Activated T-helper 1 cell treated with anti-CD3 and anti-CD28 coated beads, Interleukin-12 subunit alpha, Interleukin-12 subunit beta, Interleukin-2, Interleukin-4 antibody, amounts not matched to agents 30 ng/mL and 10 ng/mL and 1 ng/mL, durations not matched to agents 14 hours and 24 hours and 36 hours (primary cell): ENCODE measurements at regions of chr11 and their contacts with region 1.

Region 1: GRCh38 chr11:57567515-57568329 is at the start of gene UBE2L6:
- DNase-seq: peak; percentile 53
- H3K4me3 Mint-ChIP-seq: peak within 1 kb of the TSS; percentile 99
- H3K27ac Mint-ChIP-seq: peak within 1 kb of the TSS; percentile 97
- H3K4me1 Mint-ChIP-seq: peaks cover 41% of the 10 kb centered on the region
- H3K27me3 Mint-ChIP-seq: no peaks in the 10 kb centered on the region
- total RNA-seq, gene UBE2L6: 155 and 163 TPM in 2 replicates

Region 2: GRCh38 chr11:57426929-57427726 is 140.6 kb before region 1 on chr11 and contains the start of gene SLC43A3:
- intact Hi-C with region 1: loop called (anchors 1 kb)
- DNase-seq: peak; percentile 60
- H3K4me3 Mint-ChIP-seq: peak within 1 kb of the TSS; percentile 90
- H3K27ac Mint-ChIP-seq: peak within 1 kb of the TSS; percentile 80
- H3K4me1 Mint-ChIP-seq: peaks cover 56% of the 10 kb centered on the region
- H3K27me3 Mint-ChIP-seq: peaks cover 3% of the 10 kb centered on the region
- total RNA-seq, gene SLC43A3: 181 and 184 TPM in 2 replicates

Region 3: DNA sequence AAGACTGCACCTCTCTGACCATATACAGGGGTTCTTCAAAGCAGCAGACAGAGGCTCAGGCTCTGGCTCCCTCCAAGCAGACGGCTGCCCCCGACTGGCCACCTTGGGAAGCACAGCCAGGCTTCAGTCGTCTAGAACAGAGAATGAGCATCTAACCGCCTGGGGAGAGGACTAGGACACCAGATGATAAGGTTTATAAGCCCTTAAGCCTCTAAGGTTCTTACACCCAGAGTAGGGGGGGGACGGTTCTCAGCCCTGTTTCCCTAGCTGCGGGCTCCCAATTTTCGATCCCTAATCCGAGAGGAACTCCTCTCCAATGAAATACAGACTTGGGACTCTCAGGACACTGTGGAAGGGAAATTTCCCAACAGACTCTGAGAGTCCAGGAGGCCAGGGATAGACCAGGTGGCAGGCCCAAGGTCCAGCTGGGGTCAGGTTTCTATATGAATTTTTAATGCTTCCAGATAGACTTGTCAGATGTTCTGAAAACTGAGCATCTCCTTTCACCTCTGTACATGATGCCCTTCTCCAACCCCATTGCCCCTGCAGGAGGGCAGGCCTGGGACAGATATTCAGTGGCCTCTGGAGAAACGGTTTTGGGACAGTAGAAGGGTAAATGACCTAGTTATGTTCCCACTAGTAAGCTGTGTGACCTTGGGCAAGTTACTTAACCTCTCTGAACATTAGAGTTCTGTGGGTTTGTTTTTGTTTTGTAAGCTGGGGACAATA is 87.1 kb before region 1 on chr11:
- intact Hi-C with region 1: loop called (anchors 5 kb)
- DNase-seq: peak; percentile 62
- H3K4me3 Mint-ChIP-seq: no peak overlapping the region
- H3K27ac Mint-ChIP-seq: no peak overlapping the region
- H3K4me1 Mint-ChIP-seq: peaks cover 12% of the 10 kb centered on the region
- H3K27me3 Mint-ChIP-seq: peaks cover 49% of the 10 kb centered on the region

Region 4: GRCh38 chr11:57657194-57658022 is 89.7 kb after region 1 on chr11 and contains the start of gene CLP1:
- intact Hi-C with region 1: loop called (anchors 1 kb)
- DNase-seq: peak; percentile 99
- H3K4me3 Mint-ChIP-seq: peak within 1 kb of the TSS; percentile 96
- H3K27ac Mint-ChIP-seq: peak within 1 kb of the TSS; percentile 95
- H3K4me1 Mint-ChIP-seq: peaks cover 18% of the 10 kb centered on the region
- H3K27me3 Mint-ChIP-seq: no peaks in the 10 kb centered on the region
- total RNA-seq, gene CLP1: 17.8 and 19.1 TPM in 2 replicates

Region 5: DNA sequence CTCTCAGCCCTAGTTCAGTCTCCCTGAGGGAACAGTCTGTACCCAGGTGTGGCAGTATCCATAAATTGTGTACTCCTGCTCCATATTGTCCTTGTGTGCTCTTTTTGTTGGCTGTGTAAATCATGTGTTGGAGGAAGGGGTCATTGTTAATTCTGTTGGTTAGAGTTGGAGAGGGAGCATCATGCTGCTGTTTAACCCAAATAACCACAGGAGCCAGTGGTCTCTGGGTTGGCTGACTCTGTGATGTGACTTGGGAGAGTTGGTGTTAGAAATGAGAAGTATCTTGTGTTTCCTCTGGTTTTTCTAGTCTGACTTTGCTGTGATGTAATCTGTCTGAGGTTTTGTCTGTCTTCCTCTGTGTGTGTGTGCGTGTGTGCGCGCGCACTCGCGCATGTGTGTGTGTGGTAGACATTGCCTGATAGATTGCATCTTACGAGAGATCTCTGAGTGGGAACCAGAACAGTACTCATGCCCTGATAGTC is 224.4 kb after region 1 on chr11:
- intact Hi-C with region 1: loop called (anchors 2 kb)
- DNase-seq: peak; percentile 84
- H3K4me3 Mint-ChIP-seq: peak overlapping the region; percentile 53
- H3K27ac Mint-ChIP-seq: peak overlapping the region; percentile 86
- H3K4me1 Mint-ChIP-seq: peaks cover 50% of the 10 kb centered on the region
- H3K27me3 Mint-ChIP-seq: peaks cover 1% of the 10 kb centered on the region

Region 6: DNA sequence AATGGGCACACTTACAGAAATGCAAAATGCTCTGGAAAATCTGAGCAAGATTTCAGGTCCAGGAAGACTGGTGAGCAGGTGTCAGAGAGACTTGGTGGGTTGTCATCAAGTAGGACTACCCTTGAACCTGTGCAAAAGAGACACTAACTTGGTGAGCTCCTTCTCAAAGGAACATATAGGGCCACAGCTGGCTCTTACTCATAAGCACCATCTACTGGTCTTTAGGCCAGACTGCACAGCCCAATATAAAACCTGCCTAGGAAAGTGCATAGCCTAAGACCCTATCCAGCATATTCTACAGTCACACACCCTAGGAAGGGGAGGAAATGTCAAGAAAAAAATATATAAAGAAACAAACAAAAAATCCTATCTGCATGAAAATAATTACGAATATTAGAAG is 718.5 kb after region 1 on chr11:
- intact Hi-C with region 1: loop called (anchors 2 kb)
- DNase-seq: no peak
- H3K4me3 Mint-ChIP-seq: no peak overlapping the region
- H3K27ac Mint-ChIP-seq: no peak overlapping the region
- H3K4me1 Mint-ChIP-seq: no peaks in the 10 kb centered on the region
- H3K27me3 Mint-ChIP-seq: peaks cover 4% of the 10 kb centered on the region